Heart left ventricle (tissue), 16 donors: ENCODE measurements at regions of chr2 and their contacts with region 1.

Region 1: DNA sequence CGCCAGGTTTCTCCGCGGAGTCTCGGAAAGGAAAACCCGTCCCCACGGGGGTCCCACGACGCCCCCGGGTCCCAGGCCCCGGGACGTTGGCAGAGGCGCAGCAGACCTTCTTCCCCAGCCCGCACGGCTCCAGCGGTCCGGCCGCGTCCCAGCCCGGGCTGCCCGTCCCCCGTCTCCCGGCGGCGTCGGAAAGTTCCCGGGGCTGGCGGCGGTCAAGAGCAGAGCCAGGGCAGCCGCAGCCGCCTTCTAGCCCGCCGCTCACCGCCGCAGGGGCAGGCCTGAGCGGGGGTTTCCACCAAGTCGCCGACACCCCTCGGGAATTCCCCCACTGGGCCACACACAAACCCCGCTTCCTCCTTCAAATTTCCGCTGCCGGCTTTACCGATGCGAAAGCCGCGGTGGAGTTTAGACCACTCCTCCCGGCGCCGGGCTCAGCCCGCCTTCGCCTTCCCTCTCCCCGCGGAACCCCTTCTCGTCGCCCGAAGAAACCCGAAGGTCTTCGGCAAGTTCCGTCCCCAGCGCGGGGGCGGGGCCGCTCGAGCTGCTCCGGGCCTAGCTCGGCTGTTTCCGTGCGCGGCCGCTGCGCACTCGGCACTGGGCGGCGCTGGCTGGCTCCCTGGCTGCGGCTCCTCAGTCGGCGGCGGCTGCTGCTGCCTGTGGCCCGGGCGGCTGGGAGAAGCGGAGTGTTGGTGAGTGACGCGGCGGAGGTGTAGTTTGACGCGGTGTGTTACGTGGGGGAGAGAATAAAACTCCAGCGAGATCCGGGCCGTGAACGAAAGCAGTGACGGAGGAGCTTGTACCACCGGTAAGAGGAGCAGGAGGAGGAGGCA is at the start of gene CREB1:
- DNase-seq: peak; percentile 98 to 100 (median 99)
- ATAC-seq: peak; percentile 93 to 97 (median 96)
- H3K4me3 ChIP-seq: peak within 1 kb of the TSS; percentile 58 to 94 (median 80)
- H3K27ac ChIP-seq: peak within 1 kb of the TSS; percentile 91 to 100 (median 98)
- H3K4me1 ChIP-seq: peaks cover 0 to 62% (median 40%) of the 10 kb centered on the region in 12 donors
- H3K27me3 ChIP-seq: no peaks in the 10 kb centered on the region
- CTCF ChIP-seq: peak in 3 of 12 donors; percentile 11 to 34 (median 21)
- POLR2A ChIP-seq: peak; percentile 92 to 99
- total RNA-seq, gene CREB1: 32.1 to 58.9 (median 49.3) TPM

Region 2: DNA sequence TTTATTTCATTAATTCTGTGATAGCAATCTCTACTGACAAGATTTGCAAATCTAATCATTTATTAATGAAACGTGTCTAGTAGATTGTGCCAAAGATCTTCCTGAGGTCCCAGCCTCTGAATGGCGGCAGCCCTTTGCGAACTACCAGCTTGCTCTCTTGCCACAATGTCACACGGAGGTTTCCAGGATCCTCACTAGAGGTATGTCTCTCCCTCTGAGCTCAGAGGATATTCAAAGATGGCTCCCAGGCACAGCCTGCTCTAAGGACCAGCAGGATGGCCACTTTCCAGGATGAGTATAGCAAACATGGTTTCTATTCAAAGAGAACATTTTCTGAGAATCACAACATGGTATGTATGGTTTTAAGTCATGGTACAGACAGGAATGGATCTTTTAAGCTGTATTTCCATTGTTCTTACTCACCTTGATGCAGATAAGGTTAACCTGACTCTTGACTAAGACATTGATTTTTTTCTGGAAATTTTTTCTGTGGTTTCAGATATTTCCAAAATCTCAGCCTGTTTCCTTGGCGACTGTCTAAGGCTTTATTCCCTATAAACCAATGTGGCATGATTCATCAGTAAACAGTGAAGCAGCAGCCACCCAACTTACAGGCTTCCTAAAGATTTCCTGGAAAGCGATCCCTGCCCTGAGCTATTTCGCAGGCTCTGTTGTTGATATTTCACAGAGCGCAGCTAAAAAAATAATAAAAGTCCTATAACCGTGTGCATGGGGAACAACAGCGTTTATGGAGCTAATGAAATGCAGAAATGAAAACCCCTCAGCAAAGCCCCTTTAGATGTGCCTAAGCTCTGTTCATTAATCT is 309.7 kb before region 1 on chr2:
- intact Hi-C with region 1: no loop called
- DNase-seq: no peak
- ATAC-seq: no peak
- H3K4me3 ChIP-seq: no peak overlapping the region
- H3K27ac ChIP-seq: no peak overlapping the region
- H3K4me1 ChIP-seq: peaks cover 0 to 16% (median 6%) of the 10 kb centered on the region in 12 donors
- H3K27me3 ChIP-seq: no peaks in the 10 kb centered on the region
- CTCF ChIP-seq: no peak
- POLR2A ChIP-seq: no peak

Region 3: GRCh38 chr2:207505728-207506127 is 23.8 kb before region 1 on chr2:
- intact Hi-C with region 1: loop called in 1 of 10 experiments (anchors 2 kb)
- DNase-seq: no peak
- ATAC-seq: no peak
- H3K4me3 ChIP-seq: no peak overlapping the region
- H3K27ac ChIP-seq: peak overlapping the region in 6 of 12 donors; percentile 46 to 88 (median 72)
- H3K4me1 ChIP-seq: peaks cover 0 to 55% (median 33%) of the 10 kb centered on the region in 12 donors
- H3K27me3 ChIP-seq: no peaks in the 10 kb centered on the region
- CTCF ChIP-seq: no peak
- POLR2A ChIP-seq: no peak

Region 4: GRCh38 chr2:207565736-207566500 is 36.4 kb after region 1 on chr2:
- intact Hi-C with region 1: loop called in 1 of 10 experiments (anchors 5 kb)
- DNase-seq: no peak
- ATAC-seq: no peak
- H3K4me3 ChIP-seq: no peak overlapping the region
- H3K27ac ChIP-seq: no peak overlapping the region
- H3K4me1 ChIP-seq: peaks cover 0 to 21% (median 15%) of the 10 kb centered on the region in 12 donors
- H3K27me3 ChIP-seq: no peaks in the 10 kb centered on the region
- CTCF ChIP-seq: no peak
- POLR2A ChIP-seq: no peak

Region 5: DNA sequence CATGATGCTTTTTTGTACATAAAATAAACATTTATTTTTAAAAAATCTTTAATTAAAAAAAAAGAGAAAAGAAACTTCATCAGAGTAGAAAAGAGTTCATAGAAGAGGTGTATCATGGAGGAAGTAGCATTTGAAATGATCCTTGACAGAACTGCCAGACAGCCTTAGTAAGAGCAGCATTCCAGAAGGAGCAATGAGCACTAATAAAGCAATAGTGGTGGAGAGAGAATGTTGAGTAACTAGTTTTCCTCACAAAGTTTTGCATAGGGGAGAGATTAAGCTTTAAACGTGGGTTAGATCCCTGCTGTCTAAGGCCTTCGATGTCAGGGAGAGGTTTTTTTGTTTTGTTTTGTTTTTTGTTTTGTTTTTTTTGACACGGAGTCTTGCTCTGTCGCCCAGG is 125.5 kb after region 1 on chr2:
- intact Hi-C with region 1: no loop called
- DNase-seq: no peak
- ATAC-seq: no peak
- H3K4me3 ChIP-seq: no peak overlapping the region
- H3K27ac ChIP-seq: no peak overlapping the region
- H3K4me1 ChIP-seq: no peaks in the 10 kb centered on the region
- H3K27me3 ChIP-seq: no peaks in the 10 kb centered on the region
- CTCF ChIP-seq: no peak
- POLR2A ChIP-seq: no peak

Region 6: DNA sequence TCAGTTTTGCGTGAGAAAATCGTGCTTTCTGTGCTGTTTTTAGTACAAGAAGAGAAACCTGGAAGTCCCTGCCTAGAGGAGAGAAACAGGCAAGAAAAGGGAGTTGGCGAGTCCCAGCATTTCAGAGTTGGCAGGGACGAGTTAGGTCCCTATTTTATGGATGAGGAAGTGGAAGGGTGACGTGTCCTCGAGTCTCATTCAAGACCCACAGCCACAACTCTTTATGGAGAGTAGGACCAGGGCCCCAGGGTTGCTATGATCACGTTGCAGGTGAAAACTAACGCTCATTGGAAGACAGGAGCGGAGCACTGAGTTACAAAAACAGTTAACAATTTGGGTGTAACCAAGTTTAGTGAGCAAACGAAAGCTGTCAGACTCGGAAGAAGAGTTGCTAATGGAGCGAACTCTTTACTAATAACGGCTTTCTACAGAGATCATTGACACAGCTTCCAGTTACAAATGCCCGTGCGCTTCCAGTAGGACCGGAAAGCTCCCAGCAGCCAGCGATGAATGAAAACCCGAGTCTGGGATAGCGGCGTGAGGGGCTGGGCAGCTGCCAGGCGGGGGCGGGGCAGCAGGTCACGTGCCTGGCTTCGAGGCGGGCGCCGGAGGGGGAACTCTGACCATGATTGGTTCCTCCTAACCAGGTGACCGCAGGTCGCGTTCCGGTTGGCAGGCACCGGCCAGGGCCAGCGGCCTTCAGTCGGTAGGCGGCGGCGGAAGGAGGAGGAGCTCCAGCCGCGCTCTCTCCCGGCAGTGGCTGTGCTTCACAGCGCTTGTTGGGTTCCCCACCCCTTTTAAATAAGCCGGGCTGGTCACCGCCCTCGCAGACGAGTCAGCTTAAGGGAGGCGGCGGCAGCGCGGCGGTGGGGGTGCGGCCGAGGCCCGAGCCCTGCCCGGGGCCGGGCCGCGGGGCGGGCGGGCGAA is 181.5 kb after region 1 on chr2 and contains the start of gene CCNYL1:
- intact Hi-C with region 1: loop called in 4 of 10 experiments (anchors 5 to 10 kb)
- DNase-seq: peak; percentile 99 to 100 (median 100)
- ATAC-seq: peak; percentile 99 to 100 (median 100)
- H3K4me3 ChIP-seq: peak within 1 kb of the TSS; percentile 72 to 97 (median 90)
- H3K27ac ChIP-seq: peak within 1 kb of the TSS; percentile 79 to 95 (median 90)
- H3K4me1 ChIP-seq: peaks cover 0 to 28% (median 13%) of the 10 kb centered on the region in 12 donors
- H3K27me3 ChIP-seq: no peaks in the 10 kb centered on the region
- CTCF ChIP-seq: peak in 9 of 12 donors; percentile 14 to 56 (median 31)
- POLR2A ChIP-seq: peak; percentile 59 to 95
- total RNA-seq, gene CCNYL1: 4.5 to 17.5 (median 10.9) TPM